Dorsolateral prefrontal cortex (tissue), 120 donors: ENCODE measurements at regions of chr1 and their contacts with region 1.

Region 1: DNA sequence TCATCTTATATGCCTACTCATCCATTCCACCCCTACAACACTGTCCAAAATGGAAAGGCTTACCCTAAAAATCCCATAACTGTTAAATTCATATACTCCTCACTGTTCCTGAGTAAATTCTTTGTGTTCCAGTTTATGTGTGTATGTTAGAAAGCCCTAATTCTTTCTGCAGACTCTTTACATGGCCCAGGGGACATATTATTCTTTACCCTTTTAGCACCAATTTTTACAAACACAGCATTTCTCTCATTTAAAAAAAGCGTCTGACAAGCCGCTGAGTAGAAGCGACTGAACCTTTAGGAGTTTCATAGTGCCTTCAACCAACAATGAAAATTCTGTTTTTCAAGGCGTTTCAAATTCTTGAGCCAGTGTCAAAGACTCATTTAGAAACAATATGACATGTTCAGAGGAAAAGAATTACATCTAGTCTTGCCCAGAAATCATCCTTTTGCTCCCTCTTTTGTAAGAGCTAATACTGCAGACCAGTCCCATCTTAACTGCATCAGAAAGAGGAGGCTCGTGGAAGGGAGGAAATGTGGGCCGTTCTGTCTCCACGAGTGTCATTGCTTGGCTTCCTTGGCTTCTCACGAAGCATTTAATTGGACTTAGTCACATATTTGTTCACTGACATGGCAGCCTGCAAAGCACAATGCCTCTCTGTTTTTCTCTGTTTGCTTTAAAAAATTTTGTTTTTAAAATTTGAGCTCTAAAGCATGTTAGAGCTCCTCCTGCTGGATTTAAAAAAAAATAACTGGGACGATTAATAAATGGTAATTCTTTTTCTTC is 21.3 kb upstream of the C1orf105 start:
- DNase-seq: peak in 6 of 10 donors; percentile 41 to 69 (median 56)
- H3K4me3 ChIP-seq: peak overlapping the region in 49 of 59 donors; percentile 4 to 56 (median 29)
- H3K27ac ChIP-seq: peak overlapping the region; percentile 58 to 95 (median 89)
- H3K27me3 ChIP-seq: no peaks in the 10 kb centered on the region
- CTCF ChIP-seq: peak; percentile 59 to 92 (median 78)

Region 2: GRCh38 chr1:172002725-172003345 is 396.3 kb before region 1 on chr1:
- intact Hi-C with region 1: loop called (anchors 5 kb)
- DNase-seq: peak in 1 of 10 donors; percentile 28
- H3K4me3 ChIP-seq: no peak overlapping the region
- H3K27ac ChIP-seq: peak overlapping the region in 25 of 59 donors; percentile 5 to 68 (median 28)
- H3K27me3 ChIP-seq: no peaks in the 10 kb centered on the region
- CTCF ChIP-seq: peak; percentile 42 to 90 (median 73)

Region 3: DNA sequence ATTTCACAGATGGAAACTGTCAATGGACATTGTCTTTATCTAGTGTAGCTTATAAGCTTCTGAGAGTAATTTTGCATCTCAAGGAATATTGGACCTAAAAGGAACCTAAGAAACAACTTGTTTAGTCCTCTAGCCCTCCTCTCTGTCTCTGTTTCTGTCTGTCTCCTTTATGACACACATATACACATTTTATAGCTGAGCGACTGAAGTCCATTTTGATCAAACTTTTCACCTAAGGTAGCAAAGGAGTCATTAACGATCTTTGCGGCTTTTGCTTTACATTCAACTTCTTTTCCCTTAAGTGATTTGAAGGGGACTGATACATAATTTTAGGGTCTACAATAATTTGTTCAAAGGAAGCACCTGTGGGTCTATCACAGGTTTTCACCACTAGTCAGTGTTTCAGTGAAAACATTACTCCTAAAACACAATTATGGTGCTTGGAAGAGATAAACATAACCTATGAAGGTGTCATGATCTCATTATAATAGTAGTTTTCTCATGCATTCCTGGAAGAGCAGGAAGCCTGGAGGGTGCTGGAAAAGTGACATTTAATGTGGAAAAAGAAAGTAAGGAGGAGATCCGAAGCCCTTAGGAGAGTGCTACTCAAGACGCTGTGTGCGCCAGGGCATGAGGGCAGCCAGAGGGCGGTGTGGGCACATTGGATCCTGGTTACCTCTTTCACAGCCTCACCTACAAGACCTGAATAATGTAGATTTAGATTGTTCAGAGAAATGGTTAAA is 309.2 kb before region 1 on chr1:
- intact Hi-C with region 1: loop called in 1 of 2 experiments (anchors 2 kb)
- DNase-seq: no peak
- H3K4me3 ChIP-seq: no peak overlapping the region
- H3K27ac ChIP-seq: peak overlapping the region in 1 of 59 donors; percentile 15
- H3K27me3 ChIP-seq: no peaks in the 10 kb centered on the region
- CTCF ChIP-seq: peak in 39 of 56 donors; percentile 13 to 63 (median 32)

Region 4: GRCh38 chr1:172180501-172181285 is 218.5 kb before region 1 on chr1:
- intact Hi-C with region 1: loop called in 1 of 2 experiments (anchors 10 kb)
- DNase-seq: peak in 6 of 10 donors; percentile 21 to 43 (median 32)
- H3K4me3 ChIP-seq: peak overlapping the region in 38 of 59 donors; percentile 0 to 53 (median 32)
- H3K27ac ChIP-seq: peak overlapping the region in 58 of 59 donors; percentile 18 to 86 (median 67)
- H3K27me3 ChIP-seq: no peaks in the 10 kb centered on the region
- CTCF ChIP-seq: peak in 4 of 56 donors; percentile 5 to 17 (median 10)

Region 5: GRCh38 chr1:172286629-172287076 is 112.5 kb before region 1 on chr1:
- intact Hi-C with region 1: loop called in 1 of 2 experiments (anchors 10 kb)
- DNase-seq: no peak
- H3K4me3 ChIP-seq: no peak overlapping the region
- H3K27ac ChIP-seq: peak overlapping the region in 27 of 59 donors; percentile 1 to 78 (median 32)
- H3K27me3 ChIP-seq: no peaks in the 10 kb centered on the region
- CTCF ChIP-seq: no peak

Region 6: DNA sequence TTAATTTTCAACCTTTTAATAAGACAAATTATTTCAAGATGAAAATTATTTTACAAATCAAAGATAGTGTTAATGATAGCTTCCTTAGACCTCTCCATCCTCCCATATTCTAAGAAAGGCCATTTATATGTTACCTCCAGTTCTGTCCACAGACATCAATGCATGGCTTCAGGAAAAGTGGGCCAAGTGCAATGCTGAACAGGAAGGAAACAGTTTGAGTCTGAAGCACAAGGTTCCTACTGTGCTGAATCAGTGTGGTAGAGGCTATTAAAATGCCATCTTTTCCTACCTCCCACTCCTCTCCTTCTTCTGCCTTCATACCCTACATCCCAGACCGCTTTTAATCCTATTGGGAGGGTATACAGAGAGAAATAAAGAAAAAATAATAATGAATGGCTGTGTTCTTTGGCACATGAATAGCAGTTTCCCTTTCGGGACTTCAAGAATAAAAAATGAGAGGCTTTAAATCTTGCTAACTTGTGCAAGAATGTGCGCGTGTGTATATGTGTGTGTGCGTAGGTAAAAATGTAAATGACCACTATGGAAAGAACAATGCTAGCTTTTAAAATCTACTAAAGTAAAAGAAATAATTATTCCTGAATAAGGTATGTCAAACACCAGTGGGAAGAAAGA is 41.3 kb before region 1 on chr1:
- intact Hi-C with region 1: no loop called
- DNase-seq: no peak
- H3K4me3 ChIP-seq: peak overlapping the region in 30 of 59 donors; percentile 4 to 46 (median 18)
- H3K27ac ChIP-seq: peak overlapping the region; percentile 8 to 91 (median 78)
- H3K27me3 ChIP-seq: no peaks in the 10 kb centered on the region
- CTCF ChIP-seq: no peak